ENCODE measurements at regions of chr1 and their contacts with region 1.

Region 1: DNA sequence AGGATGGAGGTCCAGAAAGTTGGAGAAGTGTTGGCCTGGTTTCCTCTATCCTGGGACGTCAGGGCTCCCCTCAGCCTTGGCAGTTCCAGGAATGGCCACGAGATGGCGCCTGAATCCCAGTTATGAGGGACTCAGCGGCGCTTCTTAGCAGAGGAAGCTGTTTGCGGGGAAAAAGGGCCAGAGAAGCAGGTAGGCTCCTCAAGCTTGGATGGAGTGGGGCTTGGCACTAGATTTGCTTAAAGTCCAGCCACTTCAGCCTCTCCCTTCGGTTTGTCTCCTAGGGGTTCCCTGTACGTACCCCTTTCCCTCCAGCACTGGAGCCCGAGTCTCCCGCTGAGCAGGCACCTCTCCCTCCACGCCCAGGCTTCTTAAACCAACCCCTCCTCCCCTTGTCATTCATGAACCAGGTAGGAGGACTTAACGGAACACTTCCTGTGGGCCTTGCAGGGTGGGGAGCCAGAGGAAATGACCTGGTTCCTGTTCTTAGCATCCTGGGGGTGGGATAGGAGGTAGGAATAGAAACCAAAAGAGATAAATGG is 32.0 kb upstream of the TENT5B start:
- DNase-seq: peak; percentile 82
- H3K4me3 ChIP-seq: no peak overlapping the region; a peak in 1 of 4 replicates
- H3K27ac ChIP-seq: no peak overlapping the region
- H3K4me1 ChIP-seq: no peaks in the 10 kb centered on the region
- H3K27me3 ChIP-seq: no peaks in the 10 kb centered on the region
- CTCF ChIP-seq: peak; percentile 95
- EP300 ChIP-seq: no peak
- RAD21 ChIP-seq: peak; percentile 96

Region 2: GRCh38 chr1:26938004-26938658 is 106.6 kb before region 1 on chr1:
- CTCF ChIA-PET with region 1: no interaction called
- POLR2A ChIA-PET with region 1: no interaction called
- DNase-seq: no peak
- H3K4me3 ChIP-seq: no peak overlapping the region
- H3K27ac ChIP-seq: no peak overlapping the region
- H3K4me1 ChIP-seq: no peaks in the 10 kb centered on the region
- H3K27me3 ChIP-seq: no peaks in the 10 kb centered on the region
- CTCF ChIP-seq: no peak
- EP300 ChIP-seq: no peak
- RAD21 ChIP-seq: no peak

Region 3: GRCh38 chr1:26993237-26994019 is 51.3 kb before region 1 on chr1 and contains the start of gene TRNP1:
- CTCF ChIA-PET with region 1: interaction called, 26 read pairs
- POLR2A ChIA-PET with region 1: no interaction called
- DNase-seq: peak; percentile 97
- H3K4me3 ChIP-seq: peak within 1 kb of the TSS; percentile 48 to 71
- H3K27ac ChIP-seq: no peak within 1 kb of the TSS
- H3K4me1 ChIP-seq: peaks cover 9 to 12% of the 10 kb centered on the region in 2 experiments; a peak in 2 of 4 replicates
- H3K27me3 ChIP-seq: no peaks in the 10 kb centered on the region
- CTCF ChIP-seq: no peak
- EP300 ChIP-seq: no peak
- RAD21 ChIP-seq: no peak
- polyA plus RNA-seq, gene TRNP1: 8.8 and 11.6 TPM in 2 replicates

Region 4: DNA sequence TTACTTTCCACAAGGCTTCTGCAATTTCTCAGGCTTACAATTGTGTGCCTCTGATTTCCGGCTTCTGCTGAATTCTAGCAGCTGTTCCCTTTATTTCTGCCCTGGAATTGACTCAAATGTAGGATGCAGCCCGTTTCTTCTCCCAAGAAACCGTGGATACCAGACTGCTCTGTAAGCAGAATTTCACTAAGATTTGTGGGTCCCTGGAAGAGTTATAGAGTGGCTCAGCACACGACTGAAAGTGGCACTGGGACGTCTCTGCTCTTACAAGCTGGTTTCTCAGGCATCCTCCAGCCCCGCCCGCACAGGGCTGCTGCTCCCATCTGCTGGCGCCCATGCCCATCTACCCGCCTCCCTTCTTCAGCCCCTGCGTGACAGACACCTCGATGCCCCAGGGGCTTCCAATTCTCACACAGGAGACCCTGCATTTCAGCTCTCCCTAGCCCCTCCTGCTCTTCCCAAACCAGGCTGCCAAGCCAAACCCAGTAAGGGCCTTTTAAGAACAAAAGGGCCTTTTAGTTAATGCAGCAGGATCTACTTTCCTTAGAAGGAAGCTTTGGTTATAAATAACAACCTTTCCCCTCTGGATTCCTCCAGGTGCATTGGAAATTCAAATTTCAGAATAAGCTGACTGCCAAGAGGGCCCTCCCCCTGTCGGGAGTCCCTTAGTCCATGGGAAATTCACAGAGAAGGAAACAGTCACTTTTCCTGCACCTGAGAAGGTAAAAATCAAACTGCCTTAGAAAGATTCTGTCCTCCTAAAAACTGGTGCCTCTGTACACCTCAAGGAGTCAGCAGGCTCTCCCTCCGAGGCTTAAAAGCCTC is 13.3 kb after region 1 on chr1:
- CTCF ChIA-PET with region 1: interaction called, 156 read pairs
- POLR2A ChIA-PET with region 1: no interaction called
- DNase-seq: peak; percentile 68
- H3K4me3 ChIP-seq: no peak overlapping the region
- H3K27ac ChIP-seq: peak overlapping the region in 1 of 2 experiments; percentile 55; a peak in 2 of 4 replicates
- H3K4me1 ChIP-seq: peaks cover 0 to 6% of the 10 kb centered on the region in 2 experiments; a peak in 1 of 4 replicates
- H3K27me3 ChIP-seq: no peaks in the 10 kb centered on the region
- CTCF ChIP-seq: no peak
- EP300 ChIP-seq: no peak
- RAD21 ChIP-seq: no peak

Region 5: GRCh38 chr1:27097484-27097917 is 52.8 kb after region 1 on chr1:
- CTCF ChIA-PET with region 1: interaction called, 1,084 read pairs
- POLR2A ChIA-PET with region 1: interaction called, 15 read pairs
- DNase-seq: peak; percentile 91
- H3K4me3 ChIP-seq: peak overlapping the region in 1 of 2 experiments; percentile 36; a peak in 1 of 4 replicates
- H3K27ac ChIP-seq: no peak overlapping the region
- H3K4me1 ChIP-seq: peaks cover 15 to 19% of the 10 kb centered on the region in 2 experiments; a peak in 3 of 4 replicates
- H3K27me3 ChIP-seq: no peaks in the 10 kb centered on the region
- CTCF ChIP-seq: peak; percentile 97
- EP300 ChIP-seq: no peak
- RAD21 ChIP-seq: peak; percentile 96

Region 6: GRCh38 chr1:27149084-27149761 is 104.5 kb after region 1 on chr1:
- CTCF ChIA-PET with region 1: interaction called, 10 read pairs
- POLR2A ChIA-PET with region 1: no interaction called
- DNase-seq: peak; percentile 65
- H3K4me3 ChIP-seq: no peak overlapping the region
- H3K27ac ChIP-seq: peak overlapping the region in 1 of 2 experiments; percentile 48; a peak in 2 of 4 replicates
- H3K4me1 ChIP-seq: peaks cover 36 to 71% of the 10 kb centered on the region in 2 experiments; a peak in 3 of 4 replicates
- H3K27me3 ChIP-seq: no peaks in the 10 kb centered on the region
- CTCF ChIP-seq: no peak
- EP300 ChIP-seq: peak in 1 of 2 experiments; percentile 89; a peak in 2 of 4 replicates
- RAD21 ChIP-seq: no peak

Region 7: GRCh38 chr1:27284425-27285273 is 240.0 kb after region 1 on chr1:
- CTCF ChIA-PET with region 1: interaction called, 39 read pairs
- POLR2A ChIA-PET with region 1: no interaction called
- DNase-seq: peak; percentile 84
- H3K4me3 ChIP-seq: no peak overlapping the region; a peak in 1 of 4 replicates
- H3K27ac ChIP-seq: no peak overlapping the region
- H3K4me1 ChIP-seq: no peaks in the 10 kb centered on the region
- H3K27me3 ChIP-seq: no peaks in the 10 kb centered on the region
- CTCF ChIP-seq: peak; percentile 90
- EP300 ChIP-seq: no peak
- RAD21 ChIP-seq: peak; percentile 80